ENCODE measurements at regions of chr12 and their contacts with region 1.

Region 1: DNA sequence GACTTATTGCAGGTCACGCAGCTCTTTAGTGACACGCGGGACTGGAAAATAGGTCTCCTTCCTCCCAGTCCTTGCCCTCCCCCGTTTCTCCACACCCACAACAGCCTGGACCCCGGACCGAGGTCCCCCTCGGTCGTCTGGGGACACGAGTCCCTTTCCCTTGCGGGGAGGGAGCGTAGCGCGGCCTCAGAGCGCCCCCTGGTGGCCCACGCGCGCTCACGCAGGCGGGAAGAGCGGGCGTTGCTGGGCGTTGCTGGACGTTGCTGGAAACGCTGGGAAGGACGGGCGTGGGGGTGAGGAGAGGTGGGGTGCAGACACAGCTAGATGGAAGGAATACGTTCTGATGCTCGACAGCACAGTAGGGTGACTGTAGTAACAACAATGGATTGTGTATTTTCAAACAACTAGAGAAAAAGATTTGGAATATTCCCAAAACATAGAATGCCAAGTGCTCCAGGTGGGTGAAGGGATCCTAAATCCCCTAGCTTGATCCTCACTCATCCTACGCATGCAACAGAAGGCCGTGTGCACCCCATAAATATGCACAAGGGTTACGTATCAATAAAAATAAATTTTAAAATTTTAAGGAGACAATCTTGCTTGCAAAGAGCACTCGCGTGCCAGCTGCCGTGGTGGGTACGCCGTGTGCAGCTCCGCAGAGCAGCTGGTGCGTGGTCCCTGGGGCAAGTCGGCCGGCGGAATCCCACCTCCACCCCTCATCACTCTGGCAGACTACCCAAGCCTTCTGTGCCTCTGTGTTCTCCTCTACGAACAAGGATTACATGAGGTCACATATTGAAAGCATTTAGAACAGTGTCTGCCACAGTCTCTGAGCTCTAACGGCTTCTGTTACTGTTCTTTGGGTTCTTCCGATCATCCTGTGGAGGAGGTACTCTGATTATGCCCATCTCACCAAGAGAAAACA is 87.4 kb downstream of the B4GALNT3 start:
- DNase-seq: peak; percentile 91
- CTCF ChIP-seq: peak; percentile 99

Region 2: GRCh38 chr12:117816-118345 is 429.3 kb before region 1 on chr12:
- CTCF ChIA-PET with region 1: no interaction called
- POLR2A ChIA-PET with region 1: no interaction called
- DNase-seq: no peak
- CTCF ChIP-seq: no peak

Region 3: DNA sequence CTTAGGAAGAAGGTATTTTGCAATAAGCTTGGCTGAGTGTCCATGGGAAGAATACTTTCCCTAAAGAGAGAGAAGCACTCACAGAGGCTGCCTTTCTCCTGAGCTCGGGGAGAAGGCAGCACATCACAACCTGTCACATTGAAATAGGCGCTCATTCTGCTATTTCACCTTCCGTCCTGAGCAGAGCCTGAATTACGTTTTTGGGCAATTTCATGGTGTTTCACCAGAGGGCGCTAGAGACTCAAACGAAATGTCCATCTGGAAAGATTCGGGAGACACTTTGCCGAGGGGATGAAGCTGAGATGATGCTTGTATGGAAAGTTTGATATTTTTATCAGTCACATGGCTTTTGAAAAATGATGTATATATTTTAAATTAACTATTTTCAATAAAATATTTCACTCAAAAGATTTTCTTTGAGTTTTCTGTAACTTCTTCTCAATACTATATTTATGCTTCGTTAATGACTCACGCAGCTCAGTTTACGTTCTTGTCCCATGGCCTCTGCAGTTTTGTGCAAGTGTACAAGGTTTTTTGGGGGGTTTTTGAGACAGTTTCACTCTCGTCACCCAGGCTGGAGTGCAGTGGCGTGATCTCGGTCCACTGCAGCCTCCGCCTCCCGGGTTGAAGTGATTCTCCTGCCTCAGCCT is 104.8 kb before region 1 on chr12:
- CTCF ChIA-PET with region 1: interaction called, 16 read pairs
- POLR2A ChIA-PET with region 1: no interaction called
- DNase-seq: peak; percentile 34
- CTCF ChIP-seq: peak; percentile 61

Region 4: DNA sequence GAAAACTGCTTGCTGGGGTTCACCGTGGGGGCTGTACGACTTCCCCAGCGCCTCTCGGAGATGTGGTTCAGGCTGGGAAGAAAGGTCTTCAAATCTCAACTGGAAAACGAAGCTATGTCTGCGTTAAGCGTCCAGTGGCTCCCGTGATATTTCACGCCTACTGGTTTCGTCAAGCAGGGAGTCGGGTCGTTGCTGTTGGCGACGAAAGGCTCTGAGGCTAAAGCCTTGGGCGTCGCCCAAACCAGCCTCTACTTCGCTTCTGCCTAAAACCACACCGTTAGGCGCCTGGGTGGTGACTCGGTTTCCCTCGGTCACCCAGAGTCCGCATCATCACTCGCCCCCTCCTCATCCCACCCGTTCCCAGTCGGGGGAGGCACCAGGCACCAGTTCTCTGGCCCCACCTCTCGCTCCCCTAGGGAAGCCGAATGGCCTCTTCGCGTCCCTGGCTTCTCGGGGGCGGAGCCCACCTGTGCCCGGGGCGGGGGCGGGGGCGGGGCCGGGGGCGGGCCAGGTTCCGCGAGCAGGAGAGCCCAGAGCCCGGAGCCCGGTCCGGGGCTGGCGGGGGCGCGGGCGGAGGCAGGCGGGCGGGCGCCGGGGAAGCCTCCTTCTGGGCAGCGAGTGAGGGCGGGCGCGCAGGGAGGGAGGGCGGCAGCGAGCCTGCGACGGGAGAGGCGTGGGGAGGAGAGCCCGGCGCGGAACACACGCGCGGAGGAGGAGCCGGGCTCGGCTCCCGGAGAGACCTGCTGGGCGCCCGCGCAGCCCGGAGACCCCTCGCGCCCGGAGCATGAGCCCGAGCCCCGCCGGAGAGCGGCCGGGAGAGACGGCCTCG is 87.5 kb before region 1 on chr12 and contains the start of gene B4GALNT3:
- CTCF ChIA-PET with region 1: interaction called, 144 read pairs
- POLR2A ChIA-PET with region 1: no interaction called
- DNase-seq: peak; percentile 43
- CTCF ChIP-seq: no peak

Region 5: GRCh38 chr12:560691-561390 is 13.7 kb after region 1 on chr12:
- CTCF ChIA-PET with region 1: interaction called, 16 read pairs
- POLR2A ChIA-PET with region 1: no interaction called
- DNase-seq: no peak
- CTCF ChIP-seq: no peak

Measured in GM10248 (cell line).